ENCODE measurements at regions of chr14 and their contacts with region 1.

Region 1: GRCh38 chr14:73728717-73729330 is 14.6 kb upstream of the PNMA1 start:
- DNase-seq: peak; percentile 91
- ATAC-seq: peak; percentile 93
- H3K4me3 Mint-ChIP-seq: no peak overlapping the region
- H3K27ac Mint-ChIP-seq: peak overlapping the region; percentile 74
- H3K4me1 Mint-ChIP-seq: peaks cover 43% of the 10 kb centered on the region
- H3K27me3 Mint-ChIP-seq: no peaks in the 10 kb centered on the region

Region 2: GRCh38 chr14:73623493-73624054 is 105.2 kb before region 1 on chr14:
- CTCF ChIA-PET with region 1: no interaction called
- POLR2A ChIA-PET with region 1: no interaction called
- DNase-seq: no peak
- ATAC-seq: no peak
- H3K4me3 Mint-ChIP-seq: no peak overlapping the region
- H3K27ac Mint-ChIP-seq: no peak overlapping the region
- H3K4me1 Mint-ChIP-seq: no peaks in the 10 kb centered on the region
- H3K27me3 Mint-ChIP-seq: peaks cover 3% of the 10 kb centered on the region

Region 3: GRCh38 chr14:73662487-73662943 is 66.3 kb before region 1 on chr14:
- CTCF ChIA-PET with region 1: no interaction called
- POLR2A ChIA-PET with region 1: no interaction called
- DNase-seq: no peak
- ATAC-seq: no peak
- H3K4me3 Mint-ChIP-seq: no peak overlapping the region
- H3K27ac Mint-ChIP-seq: no peak overlapping the region
- H3K4me1 Mint-ChIP-seq: no peaks in the 10 kb centered on the region
- H3K27me3 Mint-ChIP-seq: no peaks in the 10 kb centered on the region

Region 4: DNA sequence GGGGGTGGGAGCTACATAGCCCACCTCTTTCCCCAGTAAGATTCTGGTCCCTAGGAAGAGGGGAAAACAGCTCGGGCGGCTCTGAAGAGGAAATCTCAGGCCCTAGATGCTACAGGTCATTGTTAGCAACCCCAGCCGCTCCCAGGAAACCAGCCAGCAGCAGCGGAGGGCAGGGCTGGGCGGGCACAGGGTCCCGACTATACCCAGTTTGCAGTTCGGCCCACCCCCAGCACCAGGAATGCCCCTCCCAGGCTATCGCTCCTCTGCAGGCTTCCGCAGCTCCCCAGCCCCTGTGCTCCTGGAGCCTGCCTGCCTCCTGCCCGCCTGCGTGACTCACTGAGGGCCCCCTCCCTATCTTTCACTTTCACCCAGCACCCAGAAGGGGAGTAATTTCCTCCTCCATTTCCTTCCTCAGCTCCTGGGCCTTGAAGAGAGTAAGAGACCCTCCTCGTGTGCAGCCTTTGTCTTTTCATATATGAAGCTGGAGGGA is 12.6 kb after region 1 on chr14:
- CTCF ChIA-PET with region 1: interaction called, 125 read pairs
- POLR2A ChIA-PET with region 1: interaction called, 9 read pairs
- DNase-seq: peak; percentile 79
- ATAC-seq: peak; percentile 71
- H3K4me3 Mint-ChIP-seq: peak overlapping the region; percentile 87
- H3K27ac Mint-ChIP-seq: peak overlapping the region; percentile 99
- H3K4me1 Mint-ChIP-seq: peaks cover 76% of the 10 kb centered on the region
- H3K27me3 Mint-ChIP-seq: no peaks in the 10 kb centered on the region

Region 5: GRCh38 chr14:73771848-73772638 is 43.2 kb after region 1 on chr14:
- CTCF ChIA-PET with region 1: interaction called, 17 read pairs
- POLR2A ChIA-PET with region 1: no interaction called
- DNase-seq: peak; percentile 76
- ATAC-seq: peak; percentile 82
- H3K4me3 Mint-ChIP-seq: peak overlapping the region; percentile 34
- H3K27ac Mint-ChIP-seq: peak overlapping the region; percentile 77
- H3K4me1 Mint-ChIP-seq: peaks cover 71% of the 10 kb centered on the region
- H3K27me3 Mint-ChIP-seq: no peaks in the 10 kb centered on the region

Region 6: DNA sequence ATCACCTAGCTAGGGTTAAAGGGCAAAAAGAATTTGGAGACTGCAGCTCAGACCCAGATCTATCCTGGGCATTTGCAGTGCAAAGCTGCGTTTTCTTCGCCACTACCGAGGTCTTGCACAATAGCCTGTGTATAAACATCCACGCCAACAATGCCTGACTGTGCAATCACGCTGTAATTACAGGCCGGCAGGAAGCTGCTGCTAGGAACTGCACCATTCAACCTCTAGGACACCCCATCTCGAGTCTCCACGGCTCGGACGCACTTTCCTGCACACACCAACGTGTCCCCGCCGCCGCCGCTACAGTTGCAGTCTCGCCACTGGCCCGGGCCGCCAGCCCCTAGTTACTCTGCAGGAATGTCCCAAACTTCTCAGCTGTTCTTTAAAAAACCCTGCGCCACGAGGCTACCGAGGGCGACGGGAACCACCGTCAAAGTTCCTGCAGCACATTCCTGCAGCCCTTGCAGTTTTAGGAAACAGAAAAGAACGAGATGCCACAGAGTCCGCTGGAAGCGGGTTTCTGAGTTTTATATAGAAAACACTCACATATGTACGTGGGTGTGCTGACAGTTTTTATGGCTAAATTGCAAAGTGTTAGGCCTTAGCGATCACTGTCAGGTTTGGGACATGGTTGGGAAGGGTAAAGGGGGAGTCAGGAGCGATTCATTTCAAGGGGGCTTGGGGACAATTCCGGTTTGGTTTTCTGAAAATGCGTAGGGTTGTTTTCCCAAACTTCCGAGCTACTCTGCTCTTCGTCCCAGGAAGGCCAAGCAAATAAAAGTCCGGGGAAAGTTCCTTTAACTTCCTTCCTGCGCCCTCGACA is 57.3 kb after region 1 on chr14:
- CTCF ChIA-PET with region 1: interaction called, 19 read pairs
- POLR2A ChIA-PET with region 1: interaction called, 3 read pairs
- DNase-seq: peak; percentile 83
- ATAC-seq: peak; percentile 68
- H3K4me3 Mint-ChIP-seq: peak overlapping the region; percentile 95
- H3K27ac Mint-ChIP-seq: peak overlapping the region; percentile 94
- H3K4me1 Mint-ChIP-seq: peaks cover 57% of the 10 kb centered on the region
- H3K27me3 Mint-ChIP-seq: no peaks in the 10 kb centered on the region

Region 7: GRCh38 chr14:73851644-73852382 is 123.0 kb after region 1 on chr14 and contains the start of gene PTGR2:
- CTCF ChIA-PET with region 1: interaction called, 10 read pairs
- POLR2A ChIA-PET with region 1: no interaction called
- DNase-seq: peak; percentile 93
- ATAC-seq: peak; percentile 98
- H3K4me3 Mint-ChIP-seq: peak within 1 kb of the TSS; percentile 96
- H3K27ac Mint-ChIP-seq: peak within 1 kb of the TSS; percentile 96
- H3K4me1 Mint-ChIP-seq: peaks cover 24% of the 10 kb centered on the region
- H3K27me3 Mint-ChIP-seq: peaks cover 4% of the 10 kb centered on the region
- total RNA-seq, gene PTGR2: 1.4 to 1.8 TPM